ENCODE measurements at regions of chr14 and their contacts with region 1.

Region 1: DNA sequence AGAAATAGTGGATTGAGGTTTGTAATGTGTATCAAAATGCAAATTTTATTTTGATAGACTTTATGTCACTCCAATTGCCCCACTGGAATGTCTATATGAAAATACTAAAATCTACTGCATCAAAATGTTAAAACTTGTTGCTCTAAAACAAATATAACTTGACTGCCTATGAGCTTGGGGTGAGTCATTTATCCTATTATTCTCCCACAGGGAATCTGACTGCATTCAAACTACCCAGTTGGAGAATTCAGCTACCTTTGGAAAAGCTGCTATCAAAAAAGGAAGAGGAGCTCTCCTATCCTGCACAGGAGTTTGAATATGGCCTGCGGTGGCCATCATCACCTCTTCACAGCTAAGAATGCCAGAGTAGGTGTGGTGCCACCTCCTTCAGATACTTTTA is 173.1 kb downstream of the KLHL28 start:
- DNase-seq: no peak
- ATAC-seq: no peak
- H3K4me3 ChIP-seq: no peak overlapping the region
- H3K4me3 Mint-ChIP-seq: no peak overlapping the region
- H3K27ac ChIP-seq: no peak overlapping the region
- H3K27ac Mint-ChIP-seq: no peak overlapping the region
- H3K4me1 ChIP-seq: no peaks in the 10 kb centered on the region
- H3K4me1 Mint-ChIP-seq: no peaks in the 10 kb centered on the region
- H3K27me3 ChIP-seq: no peaks in the 10 kb centered on the region
- H3K27me3 Mint-ChIP-seq: peaks cover 10% of the 10 kb centered on the region
- CTCF ChIP-seq: no peak

Region 2: GRCh38 chr14:44701563-44702263 is 86.9 kb before region 1 on chr14:
- CTCF ChIA-PET with region 1: no interaction called
- POLR2A ChIA-PET with region 1: no interaction called
- intact Hi-C with region 1: no loop called
- DNase-seq: no peak
- ATAC-seq: no peak
- H3K4me3 ChIP-seq: no peak overlapping the region
- H3K4me3 Mint-ChIP-seq: no peak overlapping the region
- H3K27ac ChIP-seq: no peak overlapping the region
- H3K27ac Mint-ChIP-seq: no peak overlapping the region
- H3K4me1 ChIP-seq: no peaks in the 10 kb centered on the region
- H3K4me1 Mint-ChIP-seq: no peaks in the 10 kb centered on the region
- H3K27me3 ChIP-seq: no peaks in the 10 kb centered on the region
- H3K27me3 Mint-ChIP-seq: no peaks in the 10 kb centered on the region
- CTCF ChIP-seq: no peak

Region 3: GRCh38 chr14:44833376-44834060 is 44.9 kb after region 1 on chr14:
- CTCF ChIA-PET with region 1: no interaction called
- POLR2A ChIA-PET with region 1: no interaction called
- intact Hi-C with region 1: loop called in 1 of 2 experiments (anchors 1 kb)
- DNase-seq: no peak
- ATAC-seq: no peak
- H3K4me3 ChIP-seq: no peak overlapping the region
- H3K4me3 Mint-ChIP-seq: no peak overlapping the region
- H3K27ac ChIP-seq: no peak overlapping the region
- H3K27ac Mint-ChIP-seq: no peak overlapping the region
- H3K4me1 ChIP-seq: no peaks in the 10 kb centered on the region
- H3K4me1 Mint-ChIP-seq: no peaks in the 10 kb centered on the region
- H3K27me3 ChIP-seq: no peaks in the 10 kb centered on the region
- H3K27me3 Mint-ChIP-seq: peaks cover 7% of the 10 kb centered on the region
- CTCF ChIP-seq: no peak